Dorsolateral prefrontal cortex (tissue), 120 donors: ENCODE measurements at regions of chr4 and their contacts with region 1.

Region 1: DNA sequence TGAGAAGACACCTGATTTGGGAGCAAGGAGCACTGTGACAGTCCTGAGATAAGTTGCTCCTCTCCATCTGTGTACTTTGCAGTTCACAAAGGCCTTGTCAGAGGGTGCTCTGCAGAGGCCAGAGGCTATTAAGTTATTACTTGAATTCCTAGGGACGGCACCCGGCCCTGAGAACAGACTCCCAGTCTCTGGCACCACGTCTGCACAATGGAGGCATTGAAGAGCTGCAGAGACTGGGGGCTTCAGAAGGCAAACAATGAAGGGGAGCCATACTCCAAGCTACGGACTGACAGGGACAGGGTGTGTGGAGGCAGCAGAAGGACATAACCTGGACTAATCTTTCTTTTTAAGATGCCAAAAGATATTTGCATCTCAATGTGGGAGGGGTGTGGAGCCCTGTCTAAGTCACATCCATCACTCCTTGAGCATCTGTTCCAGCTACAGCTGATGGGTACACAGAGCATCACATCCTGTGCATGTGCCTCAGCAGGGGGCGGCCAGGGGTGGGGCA is 11.5 kb downstream of the RASGEF1B start:
- DNase-seq: peak in 1 of 10 donors; percentile 39
- H3K4me3 ChIP-seq: peak overlapping the region in 2 of 59 donors; percentile 5 to 28
- H3K27ac ChIP-seq: peak overlapping the region in 57 of 59 donors; percentile 7 to 89 (median 70)
- H3K27me3 ChIP-seq: no peaks in the 10 kb centered on the region
- CTCF ChIP-seq: no peak

Region 2: GRCh38 chr4:81412946-81413495 is 47.2 kb before region 1 on chr4:
- intact Hi-C with region 1: loop called (anchors 5 kb)
- DNase-seq: no peak
- H3K4me3 ChIP-seq: no peak overlapping the region
- H3K27ac ChIP-seq: no peak overlapping the region
- H3K27me3 ChIP-seq: no peaks in the 10 kb centered on the region
- CTCF ChIP-seq: no peak